ENCODE measurements at regions of chr10 and their contacts with region 1.

Region 1: DNA sequence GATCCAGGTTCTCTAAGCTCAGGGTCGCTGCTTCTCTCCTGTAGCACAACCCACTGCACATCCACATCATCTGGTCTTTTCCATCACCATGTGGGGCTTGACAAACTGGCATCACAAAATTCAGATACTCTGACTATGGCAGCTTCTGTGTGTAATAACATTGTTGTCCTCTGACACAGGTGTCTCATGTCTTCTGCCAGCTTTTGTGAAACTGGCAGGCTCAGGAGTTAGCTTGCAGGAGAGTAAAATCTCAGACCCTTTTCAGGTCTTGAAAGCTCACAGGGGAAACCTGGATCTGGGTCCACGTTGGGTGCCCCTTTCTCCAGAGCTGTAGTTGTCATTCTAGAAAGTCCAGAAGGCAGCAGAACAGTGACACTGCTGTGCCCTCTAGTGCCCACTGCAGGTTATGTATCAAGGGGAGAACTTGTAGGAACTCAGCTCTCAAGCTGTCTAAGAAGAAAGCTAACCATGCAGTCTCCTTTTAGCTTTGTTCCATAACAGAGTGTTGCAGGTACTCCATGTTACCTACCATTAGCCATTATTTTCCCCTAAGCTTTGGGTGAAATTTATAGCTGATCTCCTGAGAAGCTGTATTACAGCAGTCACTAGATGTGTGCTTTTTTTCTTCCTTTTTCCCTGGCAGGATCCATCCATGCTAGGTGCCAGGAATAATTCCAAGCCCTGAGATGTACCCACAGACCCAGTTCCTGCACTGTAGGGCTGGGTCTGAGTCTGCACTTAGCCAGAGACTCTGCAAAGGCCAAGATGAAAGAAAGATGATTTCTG is 102.7 kb downstream of the ZNF248 start:
- DNase-seq: peak; percentile 97
- ATAC-seq: peak; percentile 92
- H3K4me3 ChIP-seq: no peak overlapping the region
- H3K27ac ChIP-seq: no peak overlapping the region
- H3K4me1 ChIP-seq: peaks cover 12% of the 10 kb centered on the region; the same call in 1 of the 2 replicates
- H3K27me3 ChIP-seq: no peaks in the 10 kb centered on the region
- CTCF ChIP-seq: peak; percentile 100

Region 2: DNA sequence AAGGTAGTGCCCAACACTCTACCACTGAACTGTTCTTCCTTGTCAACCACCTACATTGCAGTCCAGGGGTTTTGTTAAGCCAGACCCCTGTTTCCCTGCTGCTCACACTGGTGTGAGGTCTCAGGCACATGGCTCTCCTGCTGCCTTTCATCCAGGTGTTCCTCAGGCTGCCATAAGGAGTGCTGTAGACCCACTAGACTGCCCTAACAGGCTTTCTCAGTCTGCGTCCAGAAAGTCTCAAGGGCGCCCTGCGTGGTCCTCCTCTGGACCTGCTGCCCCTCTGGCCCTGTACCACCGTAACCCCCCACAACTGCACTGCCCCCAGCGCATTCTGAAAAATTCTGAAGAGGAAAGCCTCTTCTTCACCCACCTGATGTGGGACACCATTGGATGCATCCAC is 855.1 kb before region 1 on chr10:
- CTCF ChIA-PET with region 1: no interaction called
- POLR2A ChIA-PET with region 1: no interaction called
- intact Hi-C with region 1: loop called (anchors 1 kb)
- DNase-seq: peak; percentile 66
- ATAC-seq: peak; percentile 88
- H3K4me3 ChIP-seq: no peak overlapping the region
- H3K27ac ChIP-seq: no peak overlapping the region
- H3K4me1 ChIP-seq: peaks cover 3% of the 10 kb centered on the region; the same call in 1 of the 2 replicates
- H3K27me3 ChIP-seq: 0 out of 2 replicates have a peak, but pooled peaks cover 2% of the 10 kb centered on the region
- CTCF ChIP-seq: no peak

Region 3: DNA sequence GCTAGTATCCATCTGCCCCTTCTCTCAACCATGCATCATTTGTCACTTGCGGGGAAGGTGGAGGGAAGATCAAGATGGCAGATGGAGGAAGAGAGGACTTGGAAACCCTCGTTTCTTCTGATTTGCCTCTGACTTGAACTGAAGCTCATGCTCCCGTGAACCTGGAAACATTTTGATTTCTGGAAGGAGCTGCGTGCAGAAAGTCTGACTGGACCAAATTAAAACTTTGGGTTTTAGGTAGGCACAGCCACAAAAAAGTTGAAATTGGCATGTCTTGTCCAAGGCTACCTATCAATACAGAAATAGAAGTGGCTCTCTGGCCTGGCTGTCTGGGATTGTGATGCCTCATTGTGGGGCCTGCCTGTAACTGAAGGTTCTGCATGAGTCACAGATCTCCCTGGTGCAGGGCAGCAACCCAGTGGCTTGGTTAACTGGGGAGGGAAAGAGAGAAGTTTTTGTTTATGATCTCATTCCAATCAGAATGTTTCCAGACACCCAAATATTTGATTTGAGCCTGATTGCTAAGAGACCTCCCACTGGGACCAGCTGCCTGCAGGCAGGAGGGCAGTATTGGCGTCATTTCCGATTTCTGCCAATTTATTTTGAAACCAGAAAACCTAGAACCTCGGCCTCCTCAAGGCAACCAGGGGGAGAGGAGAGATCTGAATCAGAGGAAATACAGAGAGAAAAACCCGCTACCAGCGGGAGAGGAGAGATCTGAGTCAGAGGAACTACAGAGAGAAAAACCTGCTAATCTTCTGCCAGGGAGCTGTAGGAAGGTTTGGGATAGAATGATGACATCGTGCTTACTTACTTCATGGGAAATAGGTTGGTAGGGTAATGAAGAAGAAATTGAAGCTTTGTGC is 265.7 kb before region 1 on chr10:
- CTCF ChIA-PET with region 1: interaction called, 4 read pairs
- POLR2A ChIA-PET with region 1: no interaction called
- intact Hi-C with region 1: loop called (anchors 2 kb)
- DNase-seq: peak; percentile 99
- ATAC-seq: peak; percentile 92
- H3K4me3 ChIP-seq: peak overlapping the region; percentile 36
- H3K27ac ChIP-seq: peak overlapping the region; percentile 87
- H3K4me1 ChIP-seq: peaks cover 23% of the 10 kb centered on the region
- H3K27me3 ChIP-seq: no peaks in the 10 kb centered on the region
- CTCF ChIP-seq: peak; percentile 50; the same call in 1 of the 2 replicates

Region 4: DNA sequence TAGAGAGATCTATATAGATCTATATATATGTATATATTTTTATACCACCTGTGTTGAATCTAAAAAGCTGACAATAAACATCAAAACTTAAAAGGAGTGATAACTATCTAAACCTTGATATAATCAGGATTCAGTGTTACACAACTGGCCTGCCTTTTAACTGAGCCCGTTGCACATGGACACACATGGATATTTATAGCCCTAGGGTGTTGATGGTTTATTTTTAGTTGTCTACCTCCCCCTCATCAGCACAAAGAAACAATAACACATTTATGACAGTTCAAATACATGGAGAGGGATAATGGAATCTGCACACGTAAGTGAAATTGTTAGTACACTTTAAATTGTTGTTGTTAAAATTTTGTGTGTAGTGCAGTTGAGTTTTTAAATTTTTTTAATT is 234.2 kb before region 1 on chr10:
- CTCF ChIA-PET with region 1: interaction called, 18 read pairs
- POLR2A ChIA-PET with region 1: interaction called, 3 read pairs
- intact Hi-C with region 1: loop called (anchors 1 kb)
- DNase-seq: no peak
- ATAC-seq: no peak
- H3K4me3 ChIP-seq: no peak overlapping the region
- H3K27ac ChIP-seq: no peak overlapping the region
- H3K4me1 ChIP-seq: no peaks in the 10 kb centered on the region
- H3K27me3 ChIP-seq: no peaks in the 10 kb centered on the region
- CTCF ChIP-seq: no peak

Region 5: GRCh38 chr10:37734976-37735375 is 19.8 kb before region 1 on chr10:
- CTCF ChIA-PET with region 1: interaction called, 17 read pairs
- POLR2A ChIA-PET with region 1: interaction called, 3 read pairs
- intact Hi-C with region 1: no loop called
- DNase-seq: peak; percentile 100
- ATAC-seq: peak; percentile 72
- H3K4me3 ChIP-seq: no peak overlapping the region
- H3K27ac ChIP-seq: peak overlapping the region; percentile 7; the same call in 1 of the 2 replicates
- H3K4me1 ChIP-seq: peaks cover 42% of the 10 kb centered on the region
- H3K27me3 ChIP-seq: no peaks in the 10 kb centered on the region
- CTCF ChIP-seq: no peak

Region 6: GRCh38 chr10:37857287-37858211 is 102.8 kb after region 1 on chr10 and contains the start of gene ZNF248:
- CTCF ChIA-PET with region 1: interaction called, 5 read pairs
- POLR2A ChIA-PET with region 1: no interaction called
- intact Hi-C with region 1: loop called (anchors 2 kb)
- DNase-seq: peak; percentile 100
- ATAC-seq: peak; percentile 85
- H3K4me3 ChIP-seq: peak within 1 kb of the TSS; percentile 74
- H3K27ac ChIP-seq: peak within 1 kb of the TSS; percentile 85
- H3K4me1 ChIP-seq: peaks cover 49% of the 10 kb centered on the region
- H3K27me3 ChIP-seq: no peaks in the 10 kb centered on the region
- CTCF ChIP-seq: 0 out of 2 replicates have a peak, but pooled peaks have one; percentile 29
- total RNA-seq, gene ZNF248: 112 and 115 TPM in 2 replicates

Region 7: DNA sequence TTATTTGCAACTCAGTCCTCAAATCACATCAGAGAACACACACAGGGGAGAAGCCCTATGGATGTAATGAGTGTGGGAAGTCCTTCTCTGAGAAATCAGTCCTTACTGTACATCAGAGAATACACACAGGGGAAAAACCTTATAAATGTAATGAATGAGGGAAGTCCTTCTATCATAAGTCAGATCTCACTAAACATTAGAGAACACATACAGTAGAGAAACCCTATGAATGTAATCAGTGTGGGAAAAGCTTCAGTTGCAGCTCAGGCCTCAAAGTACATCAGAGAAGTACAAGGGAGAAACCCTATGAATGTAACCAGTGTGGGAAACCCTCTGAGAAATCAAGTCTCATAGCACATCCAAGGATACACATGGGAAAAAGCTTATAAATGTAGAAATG is 141.7 kb after region 1 on chr10:
- CTCF ChIA-PET with region 1: no interaction called
- POLR2A ChIA-PET with region 1: no interaction called
- intact Hi-C with region 1: no loop called
- DNase-seq: no peak
- ATAC-seq: no peak
- H3K4me3 ChIP-seq: peak overlapping the region; percentile 0; the same call in 1 of the 2 replicates
- H3K27ac ChIP-seq: no peak overlapping the region
- H3K4me1 ChIP-seq: no peaks in the 10 kb centered on the region
- H3K27me3 ChIP-seq: no peaks in the 10 kb centered on the region
- CTCF ChIP-seq: no peak

Measured in PC-3 (cell line).